Posterior cingulate gyrus (tissue), 11 donors: ENCODE measurements at regions of chr11 and their contacts with region 1.

Region 1: GRCh38 chr11:128831174-128832120 is 35.6 kb downstream of the KCNJ1 start:
- DNase-seq: peak; percentile 67 to 96 (median 84)

Region 2: GRCh38 chr11:128039140-128040021 is 792.1 kb before region 1 on chr11:
- intact Hi-C with region 1: loop called (anchors 5 kb)
- DNase-seq: peak in 1 of 10 donors; percentile 62

Region 3: DNA sequence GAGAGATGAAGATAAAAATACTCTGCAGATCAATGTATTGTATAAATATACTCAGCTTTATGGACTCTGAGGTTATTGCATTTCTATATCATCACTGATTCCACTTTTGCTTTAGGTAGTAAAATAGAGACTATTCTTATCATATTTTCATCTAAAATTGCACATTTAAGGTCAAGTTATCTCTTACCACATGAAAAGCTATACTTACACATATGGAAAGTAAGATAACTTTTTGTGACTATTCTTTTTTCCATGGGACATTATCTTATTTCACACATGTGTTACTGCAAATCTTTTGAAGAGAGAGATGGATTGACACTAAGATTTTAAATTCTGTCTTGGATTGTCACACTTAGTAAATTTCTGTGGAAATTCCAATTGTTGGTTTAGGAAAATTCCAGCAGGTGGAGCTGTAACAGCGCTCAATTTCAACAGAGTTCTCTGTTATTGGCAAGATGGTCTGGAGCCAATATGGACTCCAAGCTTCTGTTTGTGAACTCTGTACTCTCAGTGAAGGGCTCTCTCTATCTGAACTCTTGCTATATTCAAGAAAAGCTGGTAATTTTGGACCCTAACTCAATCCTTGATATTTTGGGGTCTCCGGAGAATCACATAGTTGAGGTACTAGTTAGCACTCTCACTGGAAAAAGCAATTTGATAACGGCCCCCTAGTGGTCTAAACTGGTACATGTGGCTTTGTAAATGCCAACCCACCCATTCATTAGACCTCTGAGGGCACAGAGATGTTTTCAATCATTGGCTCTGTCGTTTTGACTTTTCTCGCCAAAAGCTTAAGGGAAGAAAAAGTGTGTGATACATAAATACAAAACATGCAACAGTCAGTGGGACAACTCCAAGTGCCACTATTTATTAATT is 673.8 kb before region 1 on chr11:
- intact Hi-C with region 1: loop called (anchors 5 kb)
- DNase-seq: peak in 1 of 10 donors; percentile 28

Region 4: GRCh38 chr11:128172046-128172878 is 659.2 kb before region 1 on chr11:
- intact Hi-C with region 1: loop called (anchors 1 kb)
- DNase-seq: peak; percentile 51 to 96 (median 83)

Region 5: GRCh38 chr11:128290106-128290840 is 541.2 kb before region 1 on chr11:
- intact Hi-C with region 1: loop called (anchors 10 kb)
- DNase-seq: peak in 9 of 10 donors; percentile 10 to 83 (median 34)

Region 6: DNA sequence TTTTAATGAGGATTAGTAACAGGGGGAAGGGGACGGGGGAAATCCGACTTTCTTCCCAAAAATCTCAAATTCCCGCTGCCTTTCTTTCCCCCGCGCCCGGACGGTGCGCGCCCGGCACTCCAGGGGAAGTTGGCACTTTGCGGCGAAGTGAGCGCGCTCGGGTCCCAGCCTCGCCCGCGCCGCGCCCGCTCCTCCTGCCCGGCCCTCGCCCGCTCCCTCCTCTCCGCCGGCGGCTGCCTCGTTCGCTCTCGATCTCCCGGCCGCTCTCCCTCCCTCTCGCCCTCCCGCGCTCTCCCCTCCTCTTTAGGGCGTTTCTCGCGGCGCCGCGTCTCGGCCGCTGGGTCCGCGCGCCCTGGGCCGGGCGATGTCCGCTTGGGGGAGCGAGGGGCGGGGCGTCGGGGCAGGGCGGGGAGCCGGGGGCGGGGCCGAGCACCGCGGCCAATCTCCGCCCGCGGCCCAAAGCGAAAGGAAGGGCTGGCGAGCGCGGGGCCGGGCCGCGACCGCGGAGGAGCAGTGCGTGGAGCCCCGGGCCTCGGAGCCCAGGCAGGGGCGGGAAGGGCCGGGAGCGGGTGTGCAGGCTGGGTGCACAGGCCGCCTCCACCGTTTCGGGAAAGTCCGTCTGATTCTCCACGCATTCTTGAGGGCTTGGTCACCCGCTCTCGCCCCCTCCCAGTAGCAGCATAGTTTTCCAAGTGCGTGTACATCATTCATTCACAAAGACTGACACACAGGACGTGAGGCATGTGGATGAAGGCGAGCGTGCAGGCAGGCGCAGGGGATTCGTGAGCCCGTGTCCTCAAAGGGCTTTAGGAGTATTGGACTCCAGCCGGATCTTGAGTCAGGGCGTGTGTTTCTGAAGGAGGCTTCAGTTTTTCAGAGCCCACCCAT is 309.1 kb before region 1 on chr11:
- intact Hi-C with region 1: no loop called
- DNase-seq: peak; percentile 80 to 98 (median 87)

Region 7: DNA sequence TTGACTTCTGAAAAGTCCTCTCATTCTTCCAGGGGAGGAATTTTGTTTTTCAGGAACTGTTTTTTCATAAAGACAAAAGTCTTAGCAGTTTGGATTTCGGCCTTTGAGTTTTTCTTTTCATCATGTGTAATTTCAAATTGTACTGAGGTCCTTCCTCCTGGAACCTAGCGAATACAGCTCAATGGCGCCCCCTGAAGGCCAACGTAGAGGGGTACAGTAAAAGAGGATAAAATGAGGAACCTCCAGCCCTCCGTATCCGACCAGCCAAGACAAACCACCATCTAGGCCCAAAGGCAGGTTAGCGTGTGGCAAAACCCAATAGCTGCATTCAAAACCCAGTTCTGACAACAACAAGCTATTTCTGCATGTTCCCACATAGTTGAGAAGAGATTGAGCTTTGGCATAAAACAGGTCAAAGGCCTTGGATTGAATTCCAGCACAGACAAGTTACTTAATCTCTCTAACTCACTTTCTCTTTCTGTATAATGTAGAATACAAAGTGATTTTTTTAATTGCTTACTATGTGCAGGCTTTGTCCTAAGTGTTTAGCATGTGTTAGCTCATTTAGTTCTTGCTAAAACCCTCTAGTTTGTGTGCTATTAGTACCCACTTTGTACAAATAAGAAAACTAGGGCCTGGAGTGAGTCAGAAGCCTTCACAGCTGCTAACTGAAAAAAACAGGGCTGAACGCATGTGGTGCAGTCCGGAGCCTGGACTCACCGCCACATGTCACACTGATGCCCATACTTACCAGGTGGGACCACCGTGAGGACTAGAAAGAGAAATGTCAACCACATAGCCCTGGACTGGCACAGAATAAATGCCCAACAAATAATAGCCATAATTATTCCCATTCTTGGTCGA is 200.8 kb before region 1 on chr11:
- intact Hi-C with region 1: loop called (anchors 5 kb)
- DNase-seq: peak; percentile 62 to 96 (median 85)